HEK293 (cell line): ENCODE measurements at regions of chr5 and their contacts with region 1.

Region 1: GRCh38 chr5:81183811-81184748 is 49.0 kb upstream of the CKMT2 start:
- H3K4me3 ChIP-seq: no peak overlapping the region
- H3K27ac ChIP-seq: no peak overlapping the region
- H3K4me1 ChIP-seq: no peaks in the 10 kb centered on the region
- CTCF ChIP-seq: no peak

Region 2: GRCh38 chr5:80725446-80725845 is 458.6 kb before region 1 on chr5:
- CTCF ChIA-PET with region 1: interaction called, 10 read pairs
- POLR2A ChIA-PET with region 1: no interaction called
- H3K4me3 ChIP-seq: no peak overlapping the region
- H3K27ac ChIP-seq: no peak overlapping the region
- H3K4me1 ChIP-seq: no peaks in the 10 kb centered on the region
- CTCF ChIP-seq: no peak